ENCODE measurements at regions of chr12 and their contacts with region 1.

Region 1: DNA sequence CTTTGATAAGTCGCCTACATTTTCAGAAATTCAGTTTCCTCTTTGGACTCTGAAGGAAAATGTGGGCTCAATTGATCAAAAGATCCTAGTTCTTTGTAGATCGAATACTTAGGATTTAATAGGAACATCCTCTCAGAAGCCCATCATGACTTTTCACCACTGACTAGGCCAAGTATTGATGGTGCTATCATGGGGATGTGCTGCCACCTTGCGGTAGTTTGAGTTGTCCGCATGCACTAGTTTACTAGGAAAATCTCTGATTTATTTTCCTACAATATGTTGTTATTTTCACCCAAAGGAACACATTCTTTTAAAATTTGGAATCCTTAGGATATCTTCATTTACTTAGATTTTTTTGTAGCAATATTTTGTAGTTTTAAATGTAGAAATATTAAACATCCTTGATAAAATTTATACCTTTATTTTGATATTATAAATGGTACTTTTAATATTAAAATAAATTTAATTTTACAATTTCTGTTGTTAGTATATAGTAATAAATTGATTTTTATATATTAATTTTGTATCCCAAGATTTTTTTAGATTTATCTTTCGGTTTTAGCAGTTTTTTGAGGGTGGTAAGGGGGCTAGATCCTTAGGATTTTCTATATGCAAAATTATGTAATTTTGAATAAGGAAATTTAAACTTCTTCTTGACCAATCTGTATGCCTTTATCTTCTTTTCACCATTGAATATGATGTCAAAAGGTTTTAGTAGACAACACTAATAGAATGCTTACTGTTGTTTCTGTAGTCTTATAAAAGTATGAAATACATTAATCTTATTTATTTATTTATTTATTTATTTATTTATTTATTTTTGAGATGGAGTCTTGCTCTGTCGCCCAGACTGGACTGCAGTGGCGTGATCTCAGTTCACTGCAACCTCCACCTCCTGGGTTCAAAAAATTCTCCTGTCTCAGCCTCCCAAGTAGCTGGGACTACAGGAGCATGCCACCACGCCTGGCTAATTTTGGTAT is 52.9 kb upstream of the OR9K2 start:
- DNase-seq: peak; percentile 85 to 92 (median 86)
- H3K4me3 ChIP-seq: no peak overlapping the region
- H3K27ac ChIP-seq: no peak overlapping the region
- H3K4me1 ChIP-seq: peaks cover 0 to 13% (median 5%) of the 10 kb centered on the region in 4 experiments
- H3K27me3 ChIP-seq: no peaks in the 10 kb centered on the region

Region 2: DNA sequence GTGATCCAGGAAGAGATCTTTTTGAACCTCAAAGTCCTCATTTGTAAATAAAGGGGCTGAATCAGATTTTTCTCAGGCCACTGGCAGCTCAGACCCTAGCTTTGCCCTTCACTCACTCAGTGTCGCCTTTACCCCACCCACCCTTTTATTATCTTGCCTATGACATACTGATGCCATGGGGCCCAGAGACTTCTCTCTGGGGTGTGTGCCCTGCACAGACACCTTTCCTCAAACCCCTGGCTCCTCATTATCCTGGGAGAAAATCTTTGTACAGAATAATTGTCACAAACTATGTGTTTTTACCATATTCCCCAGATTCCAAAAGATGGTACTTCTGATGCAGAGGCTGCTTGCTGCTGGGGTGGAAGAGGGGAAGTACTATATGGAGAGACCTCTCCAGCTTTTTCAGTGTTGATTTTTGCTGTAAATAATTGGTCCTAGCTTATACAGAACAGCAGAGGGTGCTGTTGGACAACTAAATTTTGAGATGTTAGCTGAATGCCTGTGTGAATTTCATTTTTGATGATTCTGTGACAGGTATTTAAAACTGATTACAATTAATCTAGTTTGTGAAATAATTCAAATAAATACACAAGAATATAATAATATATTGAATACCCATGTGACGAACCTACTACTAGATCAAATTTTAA is 371.3 kb before region 1 on chr12:
- CTCF ChIA-PET with region 1: interaction called, 21 read pairs
- POLR2A ChIA-PET with region 1: no interaction called
- DNase-seq: peak; percentile 70 to 86 (median 80)
- H3K4me3 ChIP-seq: no peak overlapping the region
- H3K27ac ChIP-seq: no peak overlapping the region
- H3K4me1 ChIP-seq: peaks cover 2 to 5% (median 4%) of the 10 kb centered on the region in 4 experiments
- H3K27me3 ChIP-seq: no peaks in the 10 kb centered on the region

Region 3: GRCh38 chr12:54759751-54760150 is 313.6 kb before region 1 on chr12:
- CTCF ChIA-PET with region 1: interaction called, 10 read pairs
- POLR2A ChIA-PET with region 1: no interaction called
- DNase-seq: peak; percentile 47 to 64 (median 61)
- H3K4me3 ChIP-seq: no peak overlapping the region
- H3K27ac ChIP-seq: no peak overlapping the region
- H3K4me1 ChIP-seq: no peaks in the 10 kb centered on the region
- H3K27me3 ChIP-seq: no peaks in the 10 kb centered on the region

Region 4: DNA sequence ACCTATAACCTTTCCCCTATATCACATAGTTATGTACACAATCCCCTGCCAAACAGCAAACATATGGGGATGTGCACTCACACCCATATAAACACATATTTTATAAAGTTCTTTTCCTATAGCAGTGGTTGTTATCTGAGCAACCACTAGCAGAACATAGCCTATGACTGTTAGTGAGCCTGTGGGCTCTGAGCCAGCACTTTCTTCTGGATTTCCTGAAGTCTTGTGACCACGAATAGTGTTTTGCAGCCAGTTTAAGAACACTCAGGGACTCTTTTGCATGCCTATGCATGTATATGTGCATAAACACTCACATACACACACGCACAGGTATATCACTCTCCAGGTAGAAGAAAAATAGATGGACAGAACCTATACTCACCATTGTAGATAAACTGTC is 105.9 kb before region 1 on chr12:
- CTCF ChIA-PET with region 1: interaction called, 23 read pairs
- POLR2A ChIA-PET with region 1: no interaction called
- DNase-seq: peak; percentile 60 to 86 (median 82)
- H3K4me3 ChIP-seq: peak overlapping the region in 4 of 7 experiments; percentile 1 to 66 (median 20)
- H3K27ac ChIP-seq: peak overlapping the region; percentile 41 to 77
- H3K4me1 ChIP-seq: peaks cover 19 to 60% (median 30%) of the 10 kb centered on the region in 4 experiments
- H3K27me3 ChIP-seq: no peaks in the 10 kb centered on the region

Region 5: GRCh38 chr12:54993161-54993835 is 80.0 kb before region 1 on chr12:
- CTCF ChIA-PET with region 1: interaction called, 495 read pairs
- POLR2A ChIA-PET with region 1: interaction called, 7 read pairs
- DNase-seq: peak; percentile 83 to 89 (median 85)
- H3K4me3 ChIP-seq: no peak overlapping the region
- H3K27ac ChIP-seq: no peak overlapping the region
- H3K4me1 ChIP-seq: peaks cover 17 to 52% (median 33%) of the 10 kb centered on the region in 4 experiments
- H3K27me3 ChIP-seq: no peaks in the 10 kb centered on the region

Region 6: GRCh38 chr12:55041345-55042055 is 31.8 kb before region 1 on chr12:
- CTCF ChIA-PET with region 1: interaction called, 10 read pairs
- POLR2A ChIA-PET with region 1: no interaction called
- DNase-seq: peak in 2 of 3 donors; percentile 23 to 31
- H3K4me3 ChIP-seq: no peak overlapping the region
- H3K27ac ChIP-seq: no peak overlapping the region
- H3K4me1 ChIP-seq: peaks cover 12 to 23% (median 14%) of the 10 kb centered on the region in 4 experiments
- H3K27me3 ChIP-seq: no peaks in the 10 kb centered on the region

Measured in common myeloid progenitor, CD34-positive (primary cell).